ENCODE measurements at regions of chr14 and their contacts with region 1.

Region 1: GRCh38 chr14:21092273-21093011 is 6.0 kb downstream of the ZNF219 start:
- DNase-seq: peak; percentile 91
- ATAC-seq: peak; percentile 85
- H3K4me3 Mint-ChIP-seq: no peak overlapping the region
- H3K27ac Mint-ChIP-seq: no peak overlapping the region
- H3K4me1 Mint-ChIP-seq: peaks cover 20% of the 10 kb centered on the region
- H3K27me3 Mint-ChIP-seq: peaks cover 7% of the 10 kb centered on the region

Region 2: DNA sequence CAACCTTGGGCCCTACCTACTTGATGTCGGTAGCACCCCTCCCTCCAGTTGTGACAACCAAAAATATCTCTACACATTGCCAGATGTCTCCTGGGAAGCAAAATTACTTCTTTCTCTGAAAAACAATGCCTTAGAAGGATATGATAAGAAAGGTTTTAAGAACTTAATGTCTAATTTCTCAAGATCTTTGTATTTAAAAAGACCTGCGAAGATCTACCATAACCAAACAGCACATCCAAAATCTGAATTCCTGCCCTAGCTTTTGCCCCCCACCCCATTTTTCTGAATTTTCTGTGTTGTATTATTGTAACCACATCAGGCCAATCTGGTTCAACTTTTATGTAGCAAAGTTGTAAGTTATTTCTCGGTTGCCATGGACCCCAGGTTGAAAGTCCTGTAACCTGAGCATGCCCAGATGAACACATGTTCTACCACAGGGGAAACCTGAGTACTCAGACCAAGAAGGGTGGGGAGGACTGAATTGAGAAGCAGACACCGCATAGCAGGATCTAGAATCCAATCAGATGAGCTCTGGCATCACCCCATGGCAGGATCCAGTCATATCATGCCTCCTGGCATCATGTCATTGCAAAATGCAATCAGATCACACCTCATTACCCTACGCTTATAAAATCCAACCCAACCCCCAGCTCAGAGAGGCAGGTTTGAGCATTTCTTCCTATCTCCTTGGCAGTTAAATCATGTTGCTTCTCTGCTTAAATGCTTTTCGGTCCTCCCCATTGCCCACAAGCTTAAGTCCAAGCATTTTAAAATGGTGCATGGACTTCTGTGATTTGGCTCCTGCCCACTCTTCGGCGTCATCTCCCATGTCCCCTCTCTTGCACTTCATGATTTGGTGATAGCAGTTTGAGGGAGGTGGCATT is 17.2 kb after region 1 on chr14:
- CTCF ChIA-PET with region 1: interaction called, 339 read pairs
- DNase-seq: peak; percentile 57
- ATAC-seq: peak; percentile 71
- H3K4me3 Mint-ChIP-seq: no peak overlapping the region
- H3K27ac Mint-ChIP-seq: no peak overlapping the region
- H3K4me1 Mint-ChIP-seq: peaks cover 32% of the 10 kb centered on the region
- H3K27me3 Mint-ChIP-seq: no peaks in the 10 kb centered on the region

Region 3: DNA sequence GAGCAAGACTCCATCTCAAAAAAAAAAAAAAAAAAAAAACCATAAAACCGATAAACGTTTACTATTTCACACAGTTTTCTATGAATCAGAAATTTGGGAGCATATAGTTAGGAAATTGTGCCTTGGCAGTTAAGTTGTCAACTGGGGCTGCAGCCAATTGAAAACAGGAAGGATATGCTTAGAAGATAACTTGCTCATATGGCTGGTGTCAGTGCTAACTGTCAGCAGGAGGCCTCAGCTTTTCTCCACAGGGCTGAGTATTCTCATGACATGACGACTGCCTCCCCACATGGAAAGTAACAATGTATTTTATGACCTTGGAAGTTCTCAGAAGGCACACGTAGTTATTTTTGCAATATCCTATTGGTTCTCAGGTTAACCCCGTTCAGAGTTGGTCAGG is 93.0 kb after region 1 on chr14:
- CTCF ChIA-PET with region 1: no interaction called
- DNase-seq: no peak
- ATAC-seq: no peak
- H3K4me3 Mint-ChIP-seq: no peak overlapping the region
- H3K27ac Mint-ChIP-seq: no peak overlapping the region
- H3K4me1 Mint-ChIP-seq: no peaks in the 10 kb centered on the region
- H3K27me3 Mint-ChIP-seq: peaks cover 29% of the 10 kb centered on the region

Measured in activated CD8-positive, alpha-beta memory T cell treated with anti-CD3 and anti-CD28 coated beads, Interleukin-2, amount 10 ng/mL, durations not matched to agents 7 days and 5 days (primary cell).